Vagina (tissue), 2 donors: ENCODE measurements at regions of chr12 and their contacts with region 1.

Region 1: GRCh38 chr12:96501139-96501761 is 11.9 kb downstream of the CFAP54 start:
- DNase-seq: no peak
- H3K4me3 ChIP-seq: no peak overlapping the region
- H3K27ac ChIP-seq: peak overlapping the region; percentile 45
- H3K4me1 ChIP-seq: no peaks in the 10 kb centered on the region
- H3K27me3 ChIP-seq: no peaks in the 10 kb centered on the region
- CTCF ChIP-seq: no peak
- POLR2A ChIP-seq: no peak

Region 2: GRCh38 chr12:95870897-95871296 is 630.4 kb before region 1 on chr12:
- intact Hi-C with region 1: no loop called
- DNase-seq: no peak
- H3K4me3 ChIP-seq: no peak overlapping the region
- H3K27ac ChIP-seq: no peak overlapping the region
- H3K4me1 ChIP-seq: no peaks in the 10 kb centered on the region
- H3K27me3 ChIP-seq: no peaks in the 10 kb centered on the region
- CTCF ChIP-seq: no peak
- POLR2A ChIP-seq: no peak

Region 3: GRCh38 chr12:96208801-96209549 is 292.3 kb before region 1 on chr12:
- intact Hi-C with region 1: loop called (anchors 10 kb)
- DNase-seq: no peak
- H3K4me3 ChIP-seq: no peak overlapping the region
- H3K27ac ChIP-seq: no peak overlapping the region
- H3K4me1 ChIP-seq: peaks cover 75% of the 10 kb centered on the region
- H3K27me3 ChIP-seq: no peaks in the 10 kb centered on the region
- CTCF ChIP-seq: no peak
- POLR2A ChIP-seq: no peak